Activated CD8-positive, alpha-beta T cell treated with anti-CD3 and anti-CD28 coated beads, Interleukin-2, amount 10 ng/mL, durations not matched to agents 7 days and 5 days (primary cell): ENCODE measurements at regions of chr3 and their contacts with region 1.

Region 1: DNA sequence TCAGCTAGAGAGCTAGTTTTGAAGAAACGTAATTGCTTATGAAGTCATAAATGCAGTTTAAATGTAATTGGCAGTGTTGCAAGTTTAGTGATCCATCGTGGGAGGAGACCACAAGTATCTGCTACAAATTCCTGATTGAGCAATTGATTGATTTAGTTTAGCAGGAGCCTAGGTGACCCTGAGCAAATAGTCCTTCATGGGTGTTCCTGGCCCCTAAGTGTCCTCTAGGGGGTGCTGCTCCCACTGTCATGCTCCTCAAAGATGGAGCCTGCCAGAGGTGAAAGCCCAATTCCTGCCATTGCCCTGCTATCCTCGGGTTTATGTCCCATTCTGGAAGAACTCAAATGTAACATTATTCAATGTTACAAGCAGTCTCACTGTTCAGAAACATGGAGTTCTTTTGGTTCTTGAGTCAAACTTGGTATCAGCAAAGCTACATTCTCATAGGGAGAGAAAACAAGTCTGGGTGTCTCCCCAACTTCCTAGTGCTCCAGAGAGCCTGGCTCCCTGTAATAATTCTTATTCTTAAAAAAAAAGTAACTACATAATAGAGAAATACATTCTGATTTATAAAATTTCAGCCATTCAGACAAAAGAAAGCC is 29.8 kb upstream of the SENP5 start:
- DNase-seq: peak; percentile 79
- ATAC-seq: peak; percentile 89
- H3K4me3 Mint-ChIP-seq: no peak overlapping the region
- H3K27ac Mint-ChIP-seq: no peak overlapping the region
- H3K4me1 Mint-ChIP-seq: no peaks in the 10 kb centered on the region
- H3K27me3 Mint-ChIP-seq: no peaks in the 10 kb centered on the region

Region 2: DNA sequence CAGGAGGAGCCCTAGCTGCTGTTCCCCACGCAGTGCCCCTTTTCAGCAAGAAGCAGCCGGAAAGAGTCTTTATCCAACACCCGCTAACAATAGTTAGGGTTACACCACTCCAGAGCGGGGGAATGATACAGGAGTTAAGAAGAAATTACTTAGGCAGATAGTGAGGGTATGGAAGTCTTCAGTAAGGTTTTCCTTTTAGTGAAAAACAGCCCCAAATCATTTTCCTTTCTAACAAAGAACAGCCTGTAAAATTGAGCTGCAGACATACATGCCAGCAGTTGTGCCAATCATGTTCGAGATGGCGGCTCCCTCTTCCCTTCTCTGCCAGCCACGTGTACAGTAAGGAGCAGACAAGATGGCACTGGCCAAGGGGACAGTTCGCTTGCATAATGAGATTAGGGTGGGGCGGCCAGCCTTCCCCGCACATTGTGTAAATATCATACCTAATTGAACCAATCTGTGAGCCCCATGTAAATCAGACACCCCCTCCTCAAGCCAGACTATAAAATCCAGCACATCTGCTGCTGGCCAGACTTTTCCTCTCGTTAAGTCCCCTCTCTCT is 11.3 kb after region 1 on chr3:
- CTCF ChIA-PET with region 1: no interaction called
- POLR2A ChIA-PET with region 1: no interaction called
- DNase-seq: no peak
- ATAC-seq: no peak
- H3K4me3 Mint-ChIP-seq: no peak overlapping the region
- H3K27ac Mint-ChIP-seq: no peak overlapping the region
- H3K4me1 Mint-ChIP-seq: no peaks in the 10 kb centered on the region
- H3K27me3 Mint-ChIP-seq: no peaks in the 10 kb centered on the region

Region 3: DNA sequence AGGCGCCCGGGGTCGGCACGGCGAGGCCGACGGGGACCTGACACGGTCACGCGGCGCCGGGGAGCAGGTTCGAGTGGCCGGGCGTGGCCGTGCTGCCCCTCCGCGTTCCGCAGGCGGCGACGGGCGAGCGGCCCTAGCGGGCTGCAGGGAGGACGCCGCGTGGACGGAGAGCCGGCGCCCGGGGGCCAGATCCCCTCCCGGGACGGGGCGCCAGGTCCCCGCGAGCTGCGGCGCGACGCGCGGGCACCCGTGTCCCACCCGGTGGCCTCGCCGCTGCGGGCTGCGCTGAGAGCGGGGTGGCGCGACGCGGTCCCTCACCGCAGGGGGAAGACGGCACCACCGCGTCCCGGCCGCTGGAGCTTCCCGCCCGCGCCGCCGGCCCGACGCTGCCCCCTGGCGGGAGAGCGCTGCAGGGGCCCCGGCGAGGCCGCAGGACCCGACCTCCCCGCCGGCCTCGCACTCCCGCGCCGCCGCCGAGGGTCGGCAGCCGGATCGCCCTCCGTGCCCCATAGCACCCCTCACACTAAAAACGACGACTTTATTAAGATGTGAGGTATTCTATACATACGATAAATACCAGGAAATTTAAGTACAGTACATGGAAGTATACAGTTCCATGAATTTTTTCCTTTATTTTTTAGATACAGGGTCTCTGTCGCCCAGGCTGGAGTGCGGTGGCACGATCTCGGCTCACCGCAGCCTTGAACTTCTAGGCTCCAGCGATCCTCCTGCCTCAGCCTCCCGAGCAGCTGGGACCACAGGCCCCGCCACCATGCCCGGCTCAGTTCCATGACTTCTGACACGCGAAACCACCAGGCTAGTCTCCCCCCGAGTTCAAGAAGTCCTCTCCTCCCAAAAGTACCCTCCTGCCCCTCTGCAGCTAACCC is 132.0 kb after region 1 on chr3:
- CTCF ChIA-PET with region 1: interaction called, 19 read pairs
- POLR2A ChIA-PET with region 1: no interaction called
- DNase-seq: peak; percentile 72
- ATAC-seq: peak; percentile 76
- H3K4me3 Mint-ChIP-seq: peak overlapping the region; percentile 69
- H3K27ac Mint-ChIP-seq: peak overlapping the region; percentile 78
- H3K4me1 Mint-ChIP-seq: peaks cover 14% of the 10 kb centered on the region
- H3K27me3 Mint-ChIP-seq: peaks cover 16% of the 10 kb centered on the region

Region 4: GRCh38 chr3:197186887-197187588 is 349.1 kb after region 1 on chr3:
- CTCF ChIA-PET with region 1: no interaction called
- POLR2A ChIA-PET with region 1: no interaction called
- DNase-seq: peak; percentile 50
- ATAC-seq: peak; percentile 93
- H3K4me3 Mint-ChIP-seq: no peak overlapping the region
- H3K27ac Mint-ChIP-seq: no peak overlapping the region
- H3K4me1 Mint-ChIP-seq: peaks cover 11% of the 10 kb centered on the region
- H3K27me3 Mint-ChIP-seq: no peaks in the 10 kb centered on the region